AG04450 (cell line): ENCODE measurements at regions of chr17 and their contacts with region 1.

Region 1: GRCh38 chr17:40317880-40318829 is 9.2 kb downstream of the RARA start:
- DNase-seq: peak; percentile 90
- H3K4me3 ChIP-seq: peak overlapping the region; percentile 82
- H3K27ac ChIP-seq: peak overlapping the region; percentile 78
- H3K27me3 ChIP-seq: no peaks in the 10 kb centered on the region
- CTCF ChIP-seq: no peak

Region 2: GRCh38 chr17:40264458-40265185 is 53.5 kb before region 1 on chr17:
- CTCF ChIA-PET with region 1: no interaction called
- POLR2A ChIA-PET with region 1: no interaction called
- DNase-seq: no peak
- H3K4me3 ChIP-seq: no peak overlapping the region
- H3K27ac ChIP-seq: no peak overlapping the region
- H3K27me3 ChIP-seq: no peaks in the 10 kb centered on the region
- CTCF ChIP-seq: no peak

Region 3: GRCh38 chr17:40287494-40288369 is 30.4 kb before region 1 on chr17 and contains the start of gene CDC6:
- CTCF ChIA-PET with region 1: interaction called, 13 read pairs
- POLR2A ChIA-PET with region 1: no interaction called
- DNase-seq: peak; percentile 97
- H3K4me3 ChIP-seq: peak within 1 kb of the TSS; percentile 81
- H3K27ac ChIP-seq: peak within 1 kb of the TSS; percentile 4
- H3K27me3 ChIP-seq: no peaks in the 10 kb centered on the region
- CTCF ChIP-seq: no peak
- polyA plus RNA-seq, gene CDC6: 8.6 and 9.1 TPM in 2 replicates

Region 4: DNA sequence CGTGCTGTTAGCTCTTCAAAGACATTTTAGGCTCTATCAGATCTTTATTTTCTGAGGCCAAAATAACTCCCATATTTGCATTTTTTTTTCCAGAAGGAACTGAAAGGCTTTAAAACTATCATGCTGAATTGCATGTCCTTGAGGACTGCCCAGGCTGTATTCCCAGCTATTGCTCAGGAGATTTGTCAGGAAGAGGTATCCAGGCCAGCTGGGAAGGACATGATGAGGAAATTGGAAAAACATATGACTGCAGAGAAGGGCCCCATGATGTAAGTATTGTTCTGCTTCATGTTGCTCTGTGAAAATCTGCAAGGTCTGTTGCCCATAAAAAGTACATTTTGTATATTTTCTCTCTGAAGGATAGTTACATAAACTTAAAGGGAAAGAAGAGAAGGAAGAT is 24.8 kb before region 1 on chr17:
- CTCF ChIA-PET with region 1: interaction called, 13 read pairs
- POLR2A ChIA-PET with region 1: no interaction called
- DNase-seq: no peak
- H3K4me3 ChIP-seq: no peak overlapping the region
- H3K27ac ChIP-seq: no peak overlapping the region
- H3K27me3 ChIP-seq: no peaks in the 10 kb centered on the region
- CTCF ChIP-seq: no peak

Region 5: GRCh38 chr17:40348568-40349422 is 30.6 kb after region 1 on chr17:
- CTCF ChIA-PET with region 1: interaction called, 13 read pairs
- POLR2A ChIA-PET with region 1: interaction called, 7 read pairs
- DNase-seq: no peak
- H3K4me3 ChIP-seq: no peak overlapping the region
- H3K27ac ChIP-seq: no peak overlapping the region
- H3K27me3 ChIP-seq: no peaks in the 10 kb centered on the region
- CTCF ChIP-seq: no peak

Region 6: GRCh38 chr17:40355123-40355803 is 37.1 kb after region 1 on chr17:
- CTCF ChIA-PET with region 1: interaction called, 13 read pairs
- POLR2A ChIA-PET with region 1: interaction called, 6 read pairs
- DNase-seq: no peak
- H3K4me3 ChIP-seq: no peak overlapping the region
- H3K27ac ChIP-seq: no peak overlapping the region
- H3K27me3 ChIP-seq: no peaks in the 10 kb centered on the region
- CTCF ChIP-seq: peak; percentile 93